IMR-90 (cell line): ENCODE measurements at regions of chr9 and their contacts with region 1.

Region 1: DNA sequence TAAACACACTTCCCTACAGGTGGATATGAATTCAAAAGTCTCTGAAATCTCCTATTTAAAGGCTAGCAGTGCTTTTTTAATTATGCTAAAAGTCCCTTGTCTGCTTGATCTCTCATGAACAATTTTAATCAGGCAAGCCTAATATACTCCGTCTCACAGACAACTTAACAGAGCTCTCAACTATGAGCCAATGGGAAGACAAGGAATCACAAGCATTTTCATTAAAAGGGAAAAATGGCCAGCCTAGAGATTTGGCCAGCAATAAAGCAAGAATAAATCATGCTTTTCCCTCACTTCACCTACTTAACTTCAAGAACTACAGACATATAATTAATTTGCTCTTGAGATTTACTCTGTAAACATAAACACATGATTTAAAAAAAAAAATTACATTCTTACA is 78.0 kb downstream of the RFX3 start:
- DNase-seq: no peak
- ATAC-seq: no peak
- H3K4me3 ChIP-seq: no peak overlapping the region
- H3K27ac ChIP-seq: no peak overlapping the region
- H3K4me1 ChIP-seq: no peaks in the 10 kb centered on the region
- H3K27me3 ChIP-seq: no peaks in the 10 kb centered on the region
- CTCF ChIP-seq: no peak
- POLR2A ChIP-seq: no peak
- RAD21 ChIP-seq: no peak

Region 2: DNA sequence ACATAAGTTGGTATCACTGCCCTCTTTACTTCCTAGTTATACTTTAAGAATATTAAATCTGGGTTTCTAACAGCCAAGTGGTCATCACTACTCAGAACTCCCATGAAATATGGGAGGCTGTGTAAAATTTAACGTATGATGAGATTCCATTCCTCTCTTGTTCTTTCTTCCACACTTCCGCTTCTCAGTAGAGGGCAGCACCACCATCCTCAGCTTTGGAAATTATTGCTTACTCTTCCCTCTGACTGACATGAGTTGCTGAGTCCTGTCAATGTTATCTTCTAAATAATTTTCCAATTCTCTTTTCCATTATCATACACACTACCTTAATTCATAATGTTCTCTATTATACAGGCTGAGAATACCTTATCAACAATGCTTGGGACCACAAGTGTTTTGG is 116.0 kb before region 1 on chr9:
- CTCF ChIA-PET with region 1: no interaction called
- POLR2A ChIA-PET with region 1: no interaction called
- dilution Hi-C with region 1: no loop called
- in situ Hi-C with region 1: no loop called
- intact Hi-C with region 1: loop called (anchors 5 kb)
- DNase-seq: no peak
- ATAC-seq: no peak
- H3K4me3 ChIP-seq: no peak overlapping the region
- H3K27ac ChIP-seq: no peak overlapping the region
- H3K4me1 ChIP-seq: no peaks in the 10 kb centered on the region
- H3K27me3 ChIP-seq: no peaks in the 10 kb centered on the region
- CTCF ChIP-seq: no peak
- POLR2A ChIP-seq: no peak
- RAD21 ChIP-seq: no peak

Region 3: GRCh38 chr9:3342159-3342777 is 105.5 kb before region 1 on chr9:
- CTCF ChIA-PET with region 1: no interaction called
- POLR2A ChIA-PET with region 1: no interaction called
- dilution Hi-C with region 1: no loop called
- in situ Hi-C with region 1: no loop called
- intact Hi-C with region 1: no loop called
- DNase-seq: peak; percentile 89
- ATAC-seq: peak; percentile 85
- H3K4me3 ChIP-seq: no peak overlapping the region
- H3K27ac ChIP-seq: peak overlapping the region; percentile 64; the same call in 1 of the 2 replicates
- H3K4me1 ChIP-seq: peaks cover 7% of the 10 kb centered on the region
- H3K27me3 ChIP-seq: no peaks in the 10 kb centered on the region
- CTCF ChIP-seq: no peak
- POLR2A ChIP-seq: no peak
- RAD21 ChIP-seq: no peak

Region 4: GRCh38 chr9:3992924-3993323 is 545.1 kb after region 1 on chr9:
- CTCF ChIA-PET with region 1: no interaction called
- POLR2A ChIA-PET with region 1: no interaction called
- dilution Hi-C with region 1: no loop called
- in situ Hi-C with region 1: no loop called
- intact Hi-C with region 1: no loop called
- DNase-seq: peak; percentile 68
- ATAC-seq: no peak
- H3K4me3 ChIP-seq: no peak overlapping the region
- H3K27ac ChIP-seq: no peak overlapping the region
- H3K4me1 ChIP-seq: no peaks in the 10 kb centered on the region
- H3K27me3 ChIP-seq: no peaks in the 10 kb centered on the region
- CTCF ChIP-seq: no peak
- POLR2A ChIP-seq: no peak
- RAD21 ChIP-seq: no peak